ENCODE measurements at regions of chr4 and their contacts with region 1.

Region 1: GRCh38 chr4:57037982-57038604 is 59.4 kb downstream of the POLR2B start:
- DNase-seq: peak; percentile 69 to 75
- H3K4me3 ChIP-seq: no peak overlapping the region
- H3K27ac ChIP-seq: peak overlapping the region in 1 of 2 donors; percentile 26
- H3K4me1 ChIP-seq: peaks cover 0 to 13% of the 10 kb centered on the region in 2 donors
- H3K27me3 ChIP-seq: no peaks in the 10 kb centered on the region
- CTCF ChIP-seq: peak; percentile 69 to 85 (median 84)
- POLR2A ChIP-seq: no peak

Region 2: DNA sequence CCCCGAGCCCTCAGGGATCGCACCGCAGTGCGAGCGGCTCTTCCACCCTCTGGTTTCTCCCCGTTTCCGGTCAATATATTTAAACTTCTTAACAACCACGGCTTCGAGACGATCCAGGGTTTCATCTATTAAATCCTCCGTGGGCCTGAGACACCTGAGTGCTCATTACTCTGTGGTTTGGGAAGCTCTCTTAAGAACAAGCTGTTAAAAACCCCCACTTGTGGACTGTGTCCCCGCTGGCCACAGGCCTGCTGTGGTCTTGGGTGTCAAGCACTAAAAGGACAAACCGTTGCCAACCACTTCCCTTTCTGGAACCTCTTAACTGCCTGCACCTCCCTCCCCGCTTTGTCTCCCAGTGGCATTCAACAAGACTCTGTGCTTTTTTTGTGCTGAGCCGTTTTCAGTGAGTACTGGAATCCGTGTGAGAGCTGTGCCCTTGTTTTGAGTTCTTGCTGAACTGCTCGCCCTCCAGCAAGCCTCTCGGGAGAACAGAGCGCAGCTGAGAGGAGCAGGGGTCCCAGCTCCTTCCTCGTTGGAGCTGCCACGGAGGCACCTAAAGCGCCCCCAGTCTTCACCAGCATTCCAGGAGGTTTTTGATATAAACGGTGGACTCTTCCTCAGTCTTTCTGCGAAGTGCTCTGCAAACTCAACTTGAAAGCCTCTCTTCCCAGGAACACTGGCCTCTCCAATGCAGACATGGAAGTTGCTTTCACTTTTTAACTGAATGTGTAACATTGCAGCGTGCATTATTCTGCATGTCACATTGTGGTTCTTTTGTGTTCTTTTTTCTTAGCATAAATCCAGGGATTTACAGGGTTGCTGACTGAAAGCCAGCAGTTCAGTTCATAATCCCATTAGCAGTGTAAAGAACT is 72.8 kb after region 1 on chr4:
- intact Hi-C with region 1: loop called (anchors 10 kb)
- DNase-seq: peak; percentile 37 to 61
- H3K4me3 ChIP-seq: peak overlapping the region; percentile 78 to 82
- H3K27ac ChIP-seq: peak overlapping the region; percentile 94 to 99
- H3K4me1 ChIP-seq: no peaks in the 10 kb centered on the region
- H3K27me3 ChIP-seq: no peaks in the 10 kb centered on the region
- CTCF ChIP-seq: no peak
- POLR2A ChIP-seq: peak in 1 of 2 donors; percentile 49

Region 3: DNA sequence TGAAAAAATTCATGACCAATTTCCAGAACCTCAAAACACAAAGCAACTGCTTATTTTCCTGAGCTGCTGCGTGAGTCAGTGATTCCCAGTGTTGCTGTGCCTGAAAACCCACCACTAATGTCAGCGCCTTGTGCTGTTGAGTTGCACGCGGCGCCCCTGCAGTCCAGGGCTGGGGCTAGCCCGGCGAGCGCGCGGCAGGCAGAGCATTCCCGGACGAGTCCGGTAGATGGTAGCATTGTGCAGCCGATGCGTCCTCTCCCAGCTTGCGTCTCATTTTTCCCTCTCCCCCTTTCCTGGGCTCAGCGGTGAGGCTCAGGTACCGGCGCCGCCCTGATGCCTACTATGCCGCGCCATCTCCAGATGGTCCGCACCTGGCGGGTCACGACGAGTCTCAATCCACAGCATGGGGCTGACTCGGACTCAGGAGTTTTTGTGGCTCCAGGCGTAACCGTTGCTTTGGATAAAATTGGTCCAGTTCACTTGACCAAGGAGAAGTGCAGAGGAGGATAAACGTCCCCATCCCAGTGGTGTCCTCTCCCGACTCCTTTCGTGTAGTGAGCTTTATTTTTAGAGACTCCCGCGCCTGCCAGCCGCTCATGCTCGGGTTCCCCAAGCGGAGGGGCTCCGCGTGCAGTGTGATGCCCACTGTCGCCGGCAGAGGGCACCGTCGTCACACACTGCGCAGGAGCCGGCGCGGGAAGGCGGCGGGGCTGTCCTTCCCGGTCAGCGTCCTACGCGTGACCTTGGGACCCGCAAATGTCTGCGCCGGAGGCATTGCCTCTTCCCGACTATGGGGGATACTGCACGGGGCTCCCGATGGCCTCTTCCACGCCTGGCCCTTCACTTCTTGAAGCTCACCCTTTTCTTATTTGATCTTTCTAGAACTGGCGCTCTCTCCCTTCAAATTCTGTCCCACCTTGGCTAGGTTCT is 125.7 kb after region 1 on chr4:
- intact Hi-C with region 1: loop called (anchors 5 kb)
- DNase-seq: peak; percentile 72 to 85
- H3K4me3 ChIP-seq: peak overlapping the region; percentile 49 to 51
- H3K27ac ChIP-seq: peak overlapping the region; percentile 77 to 81
- H3K4me1 ChIP-seq: no peaks in the 10 kb centered on the region
- H3K27me3 ChIP-seq: no peaks in the 10 kb centered on the region
- CTCF ChIP-seq: peak; percentile 81 to 95 (median 88)
- POLR2A ChIP-seq: no peak

Region 4: DNA sequence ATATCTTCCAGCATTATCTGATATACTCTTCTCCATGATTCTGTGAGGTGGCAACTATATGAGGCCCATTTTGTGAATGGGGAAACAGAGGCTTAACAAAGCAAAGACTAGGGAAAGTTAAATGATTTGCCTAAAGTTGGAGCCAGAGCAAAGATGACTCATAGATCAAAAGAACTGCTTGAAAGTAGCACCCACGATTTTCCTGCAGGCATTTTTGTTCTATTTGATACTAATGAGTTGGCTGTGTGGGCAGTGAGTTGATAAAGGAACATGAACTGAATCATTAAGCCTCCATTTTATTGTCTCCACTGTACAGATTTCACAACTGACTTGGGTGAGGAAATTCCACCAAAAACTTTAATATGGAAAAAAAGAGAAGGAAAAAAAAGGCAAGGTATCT is 211.0 kb after region 1 on chr4:
- intact Hi-C with region 1: no loop called
- DNase-seq: no peak
- H3K4me3 ChIP-seq: no peak overlapping the region
- H3K27ac ChIP-seq: no peak overlapping the region
- H3K4me1 ChIP-seq: no peaks in the 10 kb centered on the region
- H3K27me3 ChIP-seq: no peaks in the 10 kb centered on the region
- CTCF ChIP-seq: no peak
- POLR2A ChIP-seq: no peak